Psoas muscle (tissue), 8 donors: ENCODE measurements at regions of chrX and their contacts with region 1.

Region 1: DNA sequence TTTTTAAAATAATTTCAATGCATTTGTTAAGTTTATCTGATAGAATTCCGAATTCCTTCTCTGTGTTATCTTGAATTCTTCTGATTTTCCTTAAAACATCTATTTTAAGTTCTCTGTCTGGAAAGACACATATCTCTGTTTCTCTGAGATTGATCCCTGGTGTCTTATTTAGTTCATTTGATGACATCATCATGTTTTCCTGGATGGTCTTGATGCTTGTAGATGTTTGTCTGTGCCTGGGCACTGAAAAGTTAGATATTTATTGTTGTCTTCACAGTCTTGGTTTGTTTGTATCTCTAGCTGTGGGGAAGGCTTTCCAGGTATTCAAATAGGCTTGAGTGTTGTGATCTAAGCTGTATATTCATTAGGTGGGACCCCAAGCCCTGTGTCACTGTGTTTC is 1028.8 kb downstream of the GLUD2 start:
- DNase-seq: no peak
- ATAC-seq: no peak
- H3K4me3 ChIP-seq: no peak overlapping the region
- H3K27ac ChIP-seq: no peak overlapping the region
- H3K4me1 ChIP-seq: no peaks in the 10 kb centered on the region
- H3K27me3 ChIP-seq: no peaks in the 10 kb centered on the region
- CTCF ChIP-seq: no peak

Region 2: GRCh38 chrX:121782976-121783375 is 293.3 kb before region 1 on chrX:
- intact Hi-C with region 1: no loop called
- DNase-seq: no peak
- ATAC-seq: no peak
- H3K4me3 ChIP-seq: no peak overlapping the region
- H3K27ac ChIP-seq: no peak overlapping the region
- H3K4me1 ChIP-seq: no peaks in the 10 kb centered on the region
- H3K27me3 ChIP-seq: no peaks in the 10 kb centered on the region
- CTCF ChIP-seq: no peak

Region 3: GRCh38 chrX:122046226-122046625 is 30.0 kb before region 1 on chrX:
- intact Hi-C with region 1: loop called in 1 of 2 experiments (anchors 1 kb)
- DNase-seq: no peak
- ATAC-seq: no peak
- H3K4me3 ChIP-seq: no peak overlapping the region
- H3K27ac ChIP-seq: no peak overlapping the region
- H3K4me1 ChIP-seq: no peaks in the 10 kb centered on the region
- H3K27me3 ChIP-seq: no peaks in the 10 kb centered on the region
- CTCF ChIP-seq: no peak